PC-9 (cell line): ENCODE measurements at regions of chr6 and their contacts with region 1.

Region 1: DNA sequence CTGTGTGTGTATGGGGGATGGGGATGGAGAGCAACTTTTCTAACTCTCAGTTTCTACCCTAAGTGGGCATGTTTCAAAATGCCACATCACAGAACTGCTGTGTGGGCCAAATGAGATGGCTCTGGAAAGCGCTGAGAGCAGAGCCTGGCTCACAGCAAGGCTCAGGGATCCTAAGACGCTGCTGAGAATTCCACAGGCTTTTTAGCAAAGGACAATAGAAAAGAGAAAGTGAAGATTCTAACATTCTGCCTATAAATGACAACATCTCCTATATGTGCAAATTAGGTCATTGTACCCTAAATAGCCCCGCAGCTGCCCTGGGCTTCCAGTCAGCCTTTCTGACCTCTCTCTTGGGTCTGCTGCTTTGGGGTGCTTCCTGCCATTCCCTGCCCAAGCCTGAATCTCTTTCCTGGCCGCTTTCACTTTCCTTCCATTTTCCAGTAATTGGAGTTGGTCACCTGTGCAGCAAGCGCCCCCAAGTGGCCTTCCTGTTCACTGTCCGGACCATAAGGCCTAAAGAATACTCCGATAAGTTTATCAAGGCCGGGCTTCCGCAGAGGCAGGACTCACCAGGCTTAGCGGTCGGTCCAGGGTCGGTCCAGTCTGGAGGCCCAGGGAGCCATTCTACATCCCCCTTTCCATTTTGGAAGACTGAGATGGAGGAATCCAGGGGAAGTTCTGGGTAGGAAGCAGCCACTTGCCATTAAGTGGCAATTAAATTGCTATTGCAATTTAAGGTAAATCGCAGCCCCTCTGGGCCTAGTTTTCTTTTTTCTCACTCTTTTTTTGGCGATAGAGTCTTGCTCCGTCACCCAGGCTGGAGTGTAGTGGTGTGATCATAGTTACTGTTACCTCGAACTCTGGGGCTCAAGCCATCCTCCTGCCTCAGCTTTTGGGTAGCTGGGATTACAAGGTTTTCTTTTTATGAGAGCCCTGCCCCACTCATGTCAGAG is 6.6 kb upstream of the DDR1 start:
- DNase-seq: peak; percentile 72 to 86
- H3K4me3 ChIP-seq: peak overlapping the region; percentile 49; the same call in 1 of the 2 replicates
- H3K27ac ChIP-seq: no peak overlapping the region
- H3K4me1 ChIP-seq: peaks cover 20% of the 10 kb centered on the region
- H3K27me3 ChIP-seq: no peaks in the 10 kb centered on the region
- CTCF ChIP-seq: peak; percentile 92

Region 2: DNA sequence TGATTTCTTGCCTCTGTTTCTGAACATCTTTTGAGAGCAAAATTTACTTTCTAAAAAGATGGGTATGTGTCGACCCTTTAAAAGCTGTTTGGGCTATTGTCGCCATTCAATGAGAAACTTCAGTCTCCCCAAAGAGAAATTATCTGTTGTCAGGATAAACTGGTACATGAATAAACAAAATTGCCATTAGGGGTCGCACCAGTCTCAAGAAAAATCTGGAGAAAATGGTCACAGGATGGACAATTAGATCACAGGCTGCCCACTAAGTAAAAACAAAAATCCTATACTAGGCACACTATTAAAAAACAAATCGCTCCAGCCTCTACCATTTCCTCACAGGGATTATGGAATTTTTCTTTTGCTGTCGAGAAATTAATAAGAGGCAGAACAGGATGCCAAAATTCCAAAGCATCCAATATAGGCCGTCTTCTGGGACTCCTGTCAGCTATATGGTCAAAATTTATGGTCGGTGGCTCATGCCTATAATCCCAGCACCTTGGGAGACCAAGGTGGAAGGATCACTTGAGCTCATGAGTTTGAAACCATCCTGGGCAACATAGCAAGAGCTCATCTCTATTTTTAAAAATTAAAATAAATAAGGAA is 393.9 kb before region 1 on chr6:
- CTCF ChIA-PET with region 1: no interaction called
- POLR2A ChIA-PET with region 1: no interaction called
- intact Hi-C with region 1: loop called (anchors 2 kb)
- DNase-seq: peak; percentile 45 to 56
- H3K4me3 ChIP-seq: no peak overlapping the region
- H3K27ac ChIP-seq: no peak overlapping the region
- H3K4me1 ChIP-seq: no peaks in the 10 kb centered on the region; the same call in 1 of the 2 replicates
- H3K27me3 ChIP-seq: peaks cover 30% of the 10 kb centered on the region
- CTCF ChIP-seq: peak; percentile 74

Region 3: GRCh38 chr6:30678964-30679726 is 198.6 kb before region 1 on chr6:
- CTCF ChIA-PET with region 1: interaction called, 3 read pairs
- POLR2A ChIA-PET with region 1: no interaction called
- intact Hi-C with region 1: loop called (anchors 1 kb)
- DNase-seq: peak in 1 of 2 experiments; percentile 74
- H3K4me3 ChIP-seq: no peak overlapping the region
- H3K27ac ChIP-seq: no peak overlapping the region
- H3K4me1 ChIP-seq: peaks cover 30% of the 10 kb centered on the region
- H3K27me3 ChIP-seq: no peaks in the 10 kb centered on the region
- CTCF ChIP-seq: peak; percentile 94

Region 4: GRCh38 chr6:30730601-30731435 is 146.9 kb before region 1 on chr6:
- CTCF ChIA-PET with region 1: interaction called, 12 read pairs
- POLR2A ChIA-PET with region 1: interaction called, 24 read pairs
- intact Hi-C with region 1: loop called (anchors 1 kb)
- DNase-seq: peak; percentile 89 to 92
- H3K4me3 ChIP-seq: no peak overlapping the region
- H3K27ac ChIP-seq: peak overlapping the region; percentile 18; the same call in 1 of the 2 replicates
- H3K4me1 ChIP-seq: peaks cover 16% of the 10 kb centered on the region
- H3K27me3 ChIP-seq: no peaks in the 10 kb centered on the region
- CTCF ChIP-seq: peak; percentile 80